K562 (cell line): ENCODE measurements at regions of chr6 and their contacts with region 1.

Region 1: DNA sequence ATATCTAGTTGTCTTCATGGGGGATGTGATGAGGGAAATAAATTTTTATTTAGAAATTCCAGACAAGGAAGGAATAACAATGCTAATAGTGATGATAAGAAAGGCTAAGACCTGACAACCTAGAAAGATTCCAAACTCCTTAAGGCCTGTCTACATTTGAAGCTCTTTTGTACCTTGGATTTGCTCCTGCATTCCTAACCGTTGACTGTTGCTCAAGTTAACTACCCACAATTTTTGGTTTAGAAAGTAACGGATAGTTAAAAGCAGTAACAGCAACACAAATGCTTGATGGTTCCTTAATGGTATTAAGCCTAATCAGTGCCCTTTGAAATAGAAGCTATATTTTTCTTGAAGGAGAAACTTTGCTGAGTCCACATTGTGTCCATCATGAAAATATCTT is 52.9 kb downstream of the TRMT11 start:
- DNase-seq: no peak
- ATAC-seq: no peak
- H3K4me3 ChIP-seq: no peak overlapping the region
- H3K27ac ChIP-seq: no peak overlapping the region
- H3K4me1 ChIP-seq: no peaks in the 10 kb centered on the region
- H3K27me3 ChIP-seq: no peaks in the 10 kb centered on the region
- CTCF ChIP-seq: no peak
- EP300 ChIP-seq: no peak
- POLR2A ChIP-seq: no peak
- RAD21 ChIP-seq: no peak

Region 2: DNA sequence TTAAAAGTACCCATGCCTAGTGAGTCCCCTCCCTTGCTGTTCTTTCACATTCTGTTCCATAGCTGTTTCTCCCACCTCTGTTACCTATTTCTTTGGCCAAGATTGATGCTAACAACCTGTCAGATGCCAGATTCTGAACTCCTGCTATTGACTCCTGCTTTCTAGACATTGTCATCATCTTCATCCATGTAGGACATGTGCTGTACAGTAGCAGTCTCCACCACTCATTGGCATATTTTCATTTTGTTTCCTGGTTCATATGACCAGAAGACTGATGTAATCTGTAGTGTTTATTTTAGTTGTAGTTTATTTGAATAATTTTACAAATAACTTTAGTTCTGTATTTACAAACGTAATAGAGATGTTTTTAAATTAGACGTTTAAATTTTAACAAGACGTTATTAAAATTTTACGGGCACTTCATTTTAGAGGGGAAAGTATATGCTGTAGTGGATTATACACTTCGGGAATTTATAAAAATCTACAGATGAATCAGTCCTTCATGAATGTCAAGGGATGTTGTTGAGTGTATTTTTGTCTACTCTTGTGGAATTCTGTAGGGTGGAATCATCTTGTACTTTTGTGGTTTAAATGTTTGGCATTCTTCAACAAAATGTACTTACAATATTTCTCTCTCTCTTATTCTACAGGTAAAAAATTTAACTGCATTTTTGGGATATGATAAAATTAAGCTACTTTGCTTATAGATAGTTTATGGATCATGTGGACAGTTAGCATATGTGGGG is 18.8 kb before region 1 on chr6:
- CTCF ChIA-PET with region 1: no interaction called
- POLR2A ChIA-PET with region 1: no interaction called
- in situ Hi-C with region 1: no loop called
- intact Hi-C with region 1: no loop called
- DNase-seq: no peak
- ATAC-seq: no peak
- H3K4me3 ChIP-seq: no peak overlapping the region
- H3K27ac ChIP-seq: no peak overlapping the region
- H3K4me1 ChIP-seq: no peaks in the 10 kb centered on the region
- H3K27me3 ChIP-seq: no peaks in the 10 kb centered on the region
- CTCF ChIP-seq: no peak
- EP300 ChIP-seq: no peak
- POLR2A ChIP-seq: no peak
- RAD21 ChIP-seq: no peak

Region 3: DNA sequence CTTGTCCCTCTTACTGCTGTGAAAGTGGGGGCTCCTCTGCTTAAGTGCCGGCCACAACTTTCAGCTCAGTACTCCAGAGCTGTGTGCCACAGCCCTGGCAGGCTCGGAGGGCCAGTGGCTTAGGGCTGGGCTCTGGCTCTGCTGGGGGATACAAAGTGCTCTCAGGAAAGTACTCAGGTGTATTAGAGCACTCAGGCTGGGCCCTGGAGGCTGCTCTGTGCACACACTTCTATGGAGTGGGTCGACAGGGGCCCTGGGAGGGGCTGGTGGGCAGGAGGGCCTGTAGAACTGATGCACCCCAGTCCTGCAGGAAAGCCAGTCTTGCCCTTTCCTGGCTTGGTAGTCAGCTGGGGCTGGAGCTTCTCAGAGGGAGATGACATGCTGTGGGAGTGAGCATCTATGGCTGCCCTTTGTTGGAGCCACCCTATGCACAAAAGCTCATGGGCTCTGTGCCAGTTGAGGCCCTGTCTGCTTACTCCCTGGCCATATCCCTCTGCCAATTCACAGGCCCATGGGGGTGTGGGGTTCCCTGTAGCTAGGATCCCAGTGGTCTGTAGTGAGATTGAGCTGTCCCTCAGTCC is 322.6 kb after region 1 on chr6:
- CTCF ChIA-PET with region 1: no interaction called
- POLR2A ChIA-PET with region 1: no interaction called
- in situ Hi-C with region 1: no loop called
- intact Hi-C with region 1: loop called (anchors 5 kb)
- DNase-seq: no peak
- ATAC-seq: peak; percentile 42
- H3K4me3 ChIP-seq: no peak overlapping the region
- H3K27ac ChIP-seq: no peak overlapping the region
- H3K4me1 ChIP-seq: no peaks in the 10 kb centered on the region
- H3K27me3 ChIP-seq: no peaks in the 10 kb centered on the region
- CTCF ChIP-seq: no peak
- EP300 ChIP-seq: no peak
- POLR2A ChIP-seq: no peak
- RAD21 ChIP-seq: no peak